CD8-positive, alpha-beta T cell (primary cell): ENCODE measurements at regions of chr2 and their contacts with region 1.

Region 1: GRCh38 chr2:40332191-40332826 is 119.6 kb downstream of the SLC8A1 start:
- DNase-seq: no peak
- ATAC-seq: no peak
- H3K4me3 ChIP-seq: no peak overlapping the region
- H3K4me3 Mint-ChIP-seq: no peak overlapping the region
- H3K27ac ChIP-seq: no peak overlapping the region
- H3K27ac Mint-ChIP-seq: no peak overlapping the region
- H3K4me1 ChIP-seq: no peaks in the 10 kb centered on the region
- H3K4me1 Mint-ChIP-seq: no peaks in the 10 kb centered on the region
- H3K27me3 ChIP-seq: no peaks in the 10 kb centered on the region
- H3K27me3 Mint-ChIP-seq: no peaks in the 10 kb centered on the region
- CTCF ChIP-seq: no peak

Region 2: GRCh38 chr2:40348665-40349064 is 16.4 kb after region 1 on chr2:
- CTCF ChIA-PET with region 1: no interaction called
- POLR2A ChIA-PET with region 1: interaction called, 10 read pairs
- intact Hi-C with region 1: no loop called
- DNase-seq: no peak
- ATAC-seq: no peak
- H3K4me3 ChIP-seq: no peak overlapping the region
- H3K4me3 Mint-ChIP-seq: no peak overlapping the region
- H3K27ac ChIP-seq: no peak overlapping the region
- H3K27ac Mint-ChIP-seq: no peak overlapping the region
- H3K4me1 ChIP-seq: no peaks in the 10 kb centered on the region
- H3K4me1 Mint-ChIP-seq: no peaks in the 10 kb centered on the region
- H3K27me3 ChIP-seq: no peaks in the 10 kb centered on the region
- H3K27me3 Mint-ChIP-seq: no peaks in the 10 kb centered on the region
- CTCF ChIP-seq: no peak

Region 3: DNA sequence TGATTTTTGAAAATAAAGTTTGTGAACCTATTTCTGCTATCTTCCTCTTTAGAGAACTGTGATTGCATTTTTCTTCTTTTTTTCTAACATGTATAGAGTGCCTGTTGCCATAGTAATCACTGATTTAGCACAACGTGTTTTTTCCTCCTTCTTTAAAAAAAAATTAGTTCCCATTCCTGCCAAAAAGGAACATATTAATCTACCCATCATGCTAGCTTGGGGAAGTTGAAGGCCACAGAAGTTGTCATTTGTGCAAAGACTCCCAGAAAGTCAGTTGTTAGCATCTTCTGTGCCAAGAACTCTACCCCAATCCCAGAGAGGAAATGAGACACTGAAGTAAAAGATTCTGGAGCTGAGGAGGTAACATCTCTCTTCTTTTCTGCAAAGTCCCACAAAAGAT is 62.3 kb after region 1 on chr2:
- CTCF ChIA-PET with region 1: no interaction called
- POLR2A ChIA-PET with region 1: no interaction called
- intact Hi-C with region 1: no loop called
- DNase-seq: no peak
- ATAC-seq: no peak
- H3K4me3 ChIP-seq: no peak overlapping the region
- H3K4me3 Mint-ChIP-seq: no peak overlapping the region
- H3K27ac ChIP-seq: no peak overlapping the region
- H3K27ac Mint-ChIP-seq: no peak overlapping the region
- H3K4me1 ChIP-seq: no peaks in the 10 kb centered on the region
- H3K4me1 Mint-ChIP-seq: no peaks in the 10 kb centered on the region
- H3K27me3 ChIP-seq: no peaks in the 10 kb centered on the region
- H3K27me3 Mint-ChIP-seq: no peaks in the 10 kb centered on the region
- CTCF ChIP-seq: no peak